Mammary epithelial cell (primary cell): ENCODE measurements at regions of chr17 and their contacts with region 1.

Region 1: GRCh38 chr17:64281962-64282727 is 19.1 kb upstream of the TEX2 start:
- DNase-seq: peak; percentile 50
- H3K4me3 ChIP-seq: no peak overlapping the region
- H3K27ac ChIP-seq: no peak overlapping the region
- H3K4me1 ChIP-seq: peaks cover 15% of the 10 kb centered on the region
- H3K27me3 ChIP-seq: no peaks in the 10 kb centered on the region
- CTCF ChIP-seq: peak; percentile 79 to 81

Region 2: DNA sequence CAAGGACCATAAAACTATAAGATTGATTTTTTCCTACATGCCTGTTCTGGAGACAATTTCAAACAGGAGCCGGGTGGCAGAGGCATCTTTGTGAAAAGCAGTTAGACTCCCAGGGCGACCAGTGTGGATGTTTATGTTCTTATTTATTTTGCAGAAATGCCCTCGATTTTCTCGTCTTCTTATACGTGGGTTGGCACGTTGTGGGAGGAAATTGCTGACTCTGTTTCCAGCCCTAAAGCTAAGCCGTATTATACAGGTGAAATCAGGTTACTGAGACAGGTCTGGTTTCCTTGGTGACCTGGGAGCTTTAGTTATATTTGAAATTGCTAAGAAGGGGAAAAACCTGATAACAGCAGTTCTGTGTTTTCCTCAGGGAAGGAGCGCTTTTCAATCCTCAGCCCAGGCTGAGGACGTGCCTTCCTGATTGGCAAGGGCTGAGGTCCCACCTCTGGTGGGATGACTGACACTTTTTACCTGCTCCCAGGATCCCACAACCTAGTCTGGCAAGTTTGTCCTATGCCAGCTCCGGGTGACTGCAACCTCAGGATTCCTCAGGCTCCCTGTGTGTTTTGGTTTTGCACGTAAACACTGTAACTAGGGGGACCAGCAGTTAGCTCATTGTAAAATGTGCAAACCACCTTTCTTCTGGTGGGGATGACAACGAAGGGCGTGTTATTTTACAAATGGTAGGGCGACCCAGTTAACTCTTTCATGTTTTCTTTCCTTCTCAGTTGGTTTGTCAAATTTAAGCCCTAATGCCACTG is 1481.7 kb before region 1 on chr17:
- CTCF ChIA-PET with region 1: no interaction called
- dilution Hi-C with region 1: no loop called
- in situ Hi-C with region 1: no loop called
- intact Hi-C with region 1: no loop called
- DNase-seq: peak; percentile 82
- H3K4me3 ChIP-seq: no peak overlapping the region
- H3K27ac ChIP-seq: peak overlapping the region; percentile 64
- H3K4me1 ChIP-seq: peaks cover 16% of the 10 kb centered on the region
- H3K27me3 ChIP-seq: no peaks in the 10 kb centered on the region
- CTCF ChIP-seq: no peak

Region 3: GRCh38 chr17:63919311-63919723 is 362.8 kb before region 1 on chr17:
- CTCF ChIA-PET with region 1: no interaction called
- dilution Hi-C with region 1: no loop called
- in situ Hi-C with region 1: loop called in 1 of 2 experiments (anchors 25 kb)
- intact Hi-C with region 1: loop called (anchors 10 kb)
- DNase-seq: peak; percentile 38
- H3K4me3 ChIP-seq: no peak overlapping the region
- H3K27ac ChIP-seq: no peak overlapping the region
- H3K4me1 ChIP-seq: no peaks in the 10 kb centered on the region
- H3K27me3 ChIP-seq: no peaks in the 10 kb centered on the region
- CTCF ChIP-seq: peak; percentile 66 to 92

Region 4: DNA sequence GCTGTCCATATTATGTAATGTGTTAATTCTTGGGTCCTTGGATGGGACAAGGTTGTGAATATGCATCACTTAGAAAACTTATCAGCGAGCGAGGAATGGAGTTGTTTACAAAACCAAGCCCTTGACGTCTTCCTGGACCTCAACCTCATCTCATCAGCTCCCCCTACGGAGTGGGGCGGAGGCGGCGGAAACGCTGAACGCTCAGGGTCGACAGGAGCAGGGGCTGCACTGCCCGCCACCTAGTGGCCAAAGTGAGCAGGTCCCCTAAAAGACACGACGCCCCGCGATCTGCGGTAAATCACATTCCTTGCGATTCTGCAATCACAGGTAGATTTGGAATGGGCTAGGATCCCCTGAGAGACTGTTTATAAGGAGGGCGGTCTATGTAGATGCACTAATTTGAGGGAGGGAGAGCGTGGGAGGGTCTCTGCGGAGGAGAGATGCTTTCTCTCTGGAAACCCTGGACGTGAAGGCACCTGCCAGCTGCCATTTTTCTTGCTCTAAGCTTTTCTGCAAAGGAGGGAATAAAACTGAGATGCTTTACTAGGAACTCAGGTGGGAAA is 256.3 kb before region 1 on chr17:
- CTCF ChIA-PET with region 1: interaction called, 5 read pairs
- dilution Hi-C with region 1: no loop called
- in situ Hi-C with region 1: loop called (anchors 25 kb)
- intact Hi-C with region 1: loop called (anchors 1 kb)
- DNase-seq: peak; percentile 51
- H3K4me3 ChIP-seq: peak overlapping the region in 1 of 3 experiments; percentile 15
- H3K27ac ChIP-seq: no peak overlapping the region
- H3K4me1 ChIP-seq: no peaks in the 10 kb centered on the region
- H3K27me3 ChIP-seq: no peaks in the 10 kb centered on the region
- CTCF ChIP-seq: peak; percentile 91 to 93

Region 5: GRCh38 chr17:64126918-64127317 is 155.2 kb before region 1 on chr17:
- CTCF ChIA-PET with region 1: no interaction called
- dilution Hi-C with region 1: no loop called
- in situ Hi-C with region 1: no loop called
- intact Hi-C with region 1: no loop called
- DNase-seq: peak; percentile 37
- H3K4me3 ChIP-seq: no peak overlapping the region
- H3K27ac ChIP-seq: no peak overlapping the region
- H3K4me1 ChIP-seq: peaks cover 22% of the 10 kb centered on the region
- H3K27me3 ChIP-seq: no peaks in the 10 kb centered on the region
- CTCF ChIP-seq: no peak

Region 6: DNA sequence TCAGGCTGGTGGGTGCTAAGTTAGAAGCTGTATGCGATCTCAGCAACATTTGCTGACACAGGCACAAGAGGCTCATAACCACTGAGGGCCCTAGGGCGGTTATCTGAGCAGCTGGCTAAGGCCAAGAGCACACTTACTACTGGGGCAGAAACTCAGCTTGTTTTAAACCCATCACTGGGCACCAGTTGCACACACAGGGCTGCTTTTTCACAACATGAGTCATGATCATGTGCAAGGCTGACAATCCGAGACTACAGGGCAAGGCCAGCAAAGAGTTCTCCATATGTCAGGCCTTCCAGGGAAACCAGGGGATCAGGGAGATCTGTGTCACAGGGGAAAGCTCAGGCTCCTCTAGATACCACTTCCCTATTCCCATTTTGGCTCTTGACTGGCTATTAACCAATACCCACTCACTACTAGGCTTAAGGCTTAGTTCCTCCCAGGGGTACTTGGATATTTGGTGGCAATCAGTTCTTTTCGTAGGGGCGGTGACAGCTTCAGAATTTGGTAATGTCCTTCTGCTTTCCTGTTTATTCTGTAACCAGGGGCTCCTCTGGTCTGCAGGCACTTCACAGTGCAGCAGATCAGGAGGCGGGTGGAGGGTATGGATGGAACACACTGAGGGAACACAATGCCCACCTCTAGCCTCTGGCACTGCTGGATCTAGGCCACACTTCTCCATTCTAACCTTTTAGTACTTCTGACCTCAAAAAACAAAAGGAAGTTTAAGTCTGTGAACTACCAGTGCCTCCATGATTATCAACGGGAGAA is 107.3 kb before region 1 on chr17:
- CTCF ChIA-PET with region 1: no interaction called
- dilution Hi-C with region 1: no loop called
- in situ Hi-C with region 1: loop called in 1 of 2 experiments (anchors 25 kb)
- intact Hi-C with region 1: loop called (anchors 5 kb)
- DNase-seq: peak; percentile 49
- H3K4me3 ChIP-seq: no peak overlapping the region
- H3K27ac ChIP-seq: no peak overlapping the region
- H3K4me1 ChIP-seq: peaks cover 13% of the 10 kb centered on the region
- H3K27me3 ChIP-seq: no peaks in the 10 kb centered on the region
- CTCF ChIP-seq: no peak

Region 7: GRCh38 chr17:64202675-64203344 is 79.3 kb before region 1 on chr17:
- CTCF ChIA-PET with region 1: interaction called, 7 read pairs
- dilution Hi-C with region 1: no loop called
- in situ Hi-C with region 1: no loop called
- intact Hi-C with region 1: loop called (anchors 5 kb)
- DNase-seq: peak; percentile 83
- H3K4me3 ChIP-seq: no peak overlapping the region
- H3K27ac ChIP-seq: peak overlapping the region; percentile 42
- H3K4me1 ChIP-seq: peaks cover 41% of the 10 kb centered on the region
- H3K27me3 ChIP-seq: no peaks in the 10 kb centered on the region
- CTCF ChIP-seq: no peak

Region 8: DNA sequence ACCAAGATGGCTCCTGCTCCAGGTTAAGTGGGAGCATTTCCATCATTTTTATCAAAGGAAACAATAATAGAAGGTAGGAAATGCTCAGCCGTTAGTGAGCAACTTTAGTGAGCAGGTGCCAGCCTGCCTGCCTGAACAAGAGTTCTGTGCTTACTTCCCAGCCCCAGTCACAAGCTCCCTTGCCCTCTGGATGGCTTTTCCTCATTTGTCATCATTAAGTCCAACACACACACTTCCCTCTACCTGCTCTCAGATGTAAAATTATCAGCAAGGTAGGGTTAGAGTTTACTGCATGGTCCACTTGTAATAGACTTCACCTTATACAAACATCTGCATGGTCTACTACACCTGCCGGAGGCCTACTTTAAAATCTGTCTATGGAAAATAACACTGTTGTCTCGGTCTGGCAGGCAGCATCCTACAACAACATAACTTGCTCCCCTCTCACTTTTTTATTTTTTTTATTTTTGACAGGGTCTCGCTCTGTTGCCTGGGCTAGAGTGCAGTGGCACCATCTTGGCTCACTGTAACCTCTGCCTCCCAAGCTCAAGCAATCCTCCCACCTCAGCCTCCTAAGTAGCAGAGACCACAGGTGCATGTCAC is 31.8 kb before region 1 on chr17:
- CTCF ChIA-PET with region 1: no interaction called
- dilution Hi-C with region 1: no loop called
- in situ Hi-C with region 1: no loop called
- intact Hi-C with region 1: no loop called
- DNase-seq: peak; percentile 71
- H3K4me3 ChIP-seq: no peak overlapping the region
- H3K27ac ChIP-seq: peak overlapping the region; percentile 37
- H3K4me1 ChIP-seq: peaks cover 48% of the 10 kb centered on the region
- H3K27me3 ChIP-seq: no peaks in the 10 kb centered on the region
- CTCF ChIP-seq: no peak

Region 9: GRCh38 chr17:64320613-64321553 is 38.7 kb after region 1 on chr17:
- CTCF ChIA-PET with region 1: no interaction called
- dilution Hi-C with region 1: loop called (anchors 10 kb)
- in situ Hi-C with region 1: no loop called
- intact Hi-C with region 1: no loop called
- DNase-seq: peak; percentile 62
- H3K4me3 ChIP-seq: no peak overlapping the region
- H3K27ac ChIP-seq: no peak overlapping the region
- H3K4me1 ChIP-seq: no peaks in the 10 kb centered on the region
- H3K27me3 ChIP-seq: no peaks in the 10 kb centered on the region
- CTCF ChIP-seq: peak; percentile 74 to 80